CD4-positive, alpha-beta memory T cell (primary cell): ENCODE measurements at regions of chr3 and their contacts with region 1.

Region 1: DNA sequence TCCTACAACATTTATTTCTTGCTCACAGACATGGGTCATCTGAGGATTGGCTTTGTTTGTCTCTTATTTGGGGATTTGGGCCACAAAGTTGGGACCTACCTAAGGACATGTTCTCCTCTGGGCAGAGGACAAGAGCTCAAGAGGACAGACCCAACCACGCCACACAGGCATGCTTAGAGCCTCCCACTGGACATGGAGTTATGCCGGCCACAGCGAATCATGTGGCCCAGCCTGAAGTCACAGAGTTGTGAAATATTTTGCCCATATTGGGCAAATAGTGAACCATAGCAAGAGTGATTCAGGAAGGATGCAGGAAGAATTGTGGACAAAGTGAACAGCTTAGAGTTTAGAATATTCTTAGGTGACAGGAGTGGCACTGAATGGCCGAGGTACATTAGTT is 9.9 kb downstream of the TRAK1 start:
- DNase-seq: no peak
- H3K4me3 ChIP-seq: no peak overlapping the region
- H3K4me3 Mint-ChIP-seq: no peak overlapping the region
- H3K27ac ChIP-seq: no peak overlapping the region
- H3K27ac Mint-ChIP-seq: no peak overlapping the region
- H3K4me1 ChIP-seq: no peaks in the 10 kb centered on the region
- H3K4me1 Mint-ChIP-seq: peaks cover 0 to 3% (median 2%) of the 10 kb centered on the region in 4 donors
- H3K27me3 ChIP-seq: no peaks in the 10 kb centered on the region
- H3K27me3 Mint-ChIP-seq: no peaks in the 10 kb centered on the region

Region 2: DNA sequence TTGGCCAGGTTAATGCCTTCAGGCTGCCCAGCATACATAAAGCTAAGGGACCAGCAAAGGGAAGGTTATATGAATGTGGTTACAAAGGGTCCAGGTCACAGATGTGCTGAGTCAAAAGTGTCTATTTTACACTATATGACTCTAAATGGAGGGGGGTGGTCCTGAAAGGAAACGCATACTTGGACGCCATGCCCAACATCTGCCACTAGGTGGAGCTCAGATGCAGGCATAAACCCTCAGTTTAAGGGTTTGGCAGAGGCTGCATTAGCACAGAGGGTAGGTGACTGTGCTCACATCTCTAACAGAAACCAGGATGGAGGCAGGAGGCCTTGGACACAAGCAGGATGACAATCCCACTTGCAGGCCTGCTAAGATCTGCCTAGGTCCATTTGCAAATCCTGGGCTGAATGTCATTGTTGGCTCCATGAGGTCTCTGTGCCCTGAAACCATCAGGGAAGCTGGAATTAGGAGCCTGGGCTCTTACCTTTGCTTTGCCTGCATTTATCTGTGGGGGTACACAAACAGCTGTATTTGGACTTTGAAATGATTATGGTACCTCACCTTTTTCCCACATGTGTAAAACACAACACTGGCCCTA is 1520.5 kb before region 1 on chr3:
- CTCF ChIA-PET with region 1: interaction called, 13 read pairs
- POLR2A ChIA-PET with region 1: no interaction called
- intact Hi-C with region 1: loop called (anchors 1 kb)
- DNase-seq: peak; percentile 43 to 61 (median 46)
- H3K4me3 ChIP-seq: no peak overlapping the region
- H3K4me3 Mint-ChIP-seq: no peak overlapping the region
- H3K27ac ChIP-seq: no peak overlapping the region
- H3K27ac Mint-ChIP-seq: no peak overlapping the region
- H3K4me1 ChIP-seq: no peaks in the 10 kb centered on the region
- H3K4me1 Mint-ChIP-seq: peaks cover 0 to 1% (median 0%) of the 10 kb centered on the region in 4 donors
- H3K27me3 ChIP-seq: no peaks in the 10 kb centered on the region
- H3K27me3 Mint-ChIP-seq: peaks cover 5 to 10% of the 10 kb centered on the region in 2 donors

Region 3: DNA sequence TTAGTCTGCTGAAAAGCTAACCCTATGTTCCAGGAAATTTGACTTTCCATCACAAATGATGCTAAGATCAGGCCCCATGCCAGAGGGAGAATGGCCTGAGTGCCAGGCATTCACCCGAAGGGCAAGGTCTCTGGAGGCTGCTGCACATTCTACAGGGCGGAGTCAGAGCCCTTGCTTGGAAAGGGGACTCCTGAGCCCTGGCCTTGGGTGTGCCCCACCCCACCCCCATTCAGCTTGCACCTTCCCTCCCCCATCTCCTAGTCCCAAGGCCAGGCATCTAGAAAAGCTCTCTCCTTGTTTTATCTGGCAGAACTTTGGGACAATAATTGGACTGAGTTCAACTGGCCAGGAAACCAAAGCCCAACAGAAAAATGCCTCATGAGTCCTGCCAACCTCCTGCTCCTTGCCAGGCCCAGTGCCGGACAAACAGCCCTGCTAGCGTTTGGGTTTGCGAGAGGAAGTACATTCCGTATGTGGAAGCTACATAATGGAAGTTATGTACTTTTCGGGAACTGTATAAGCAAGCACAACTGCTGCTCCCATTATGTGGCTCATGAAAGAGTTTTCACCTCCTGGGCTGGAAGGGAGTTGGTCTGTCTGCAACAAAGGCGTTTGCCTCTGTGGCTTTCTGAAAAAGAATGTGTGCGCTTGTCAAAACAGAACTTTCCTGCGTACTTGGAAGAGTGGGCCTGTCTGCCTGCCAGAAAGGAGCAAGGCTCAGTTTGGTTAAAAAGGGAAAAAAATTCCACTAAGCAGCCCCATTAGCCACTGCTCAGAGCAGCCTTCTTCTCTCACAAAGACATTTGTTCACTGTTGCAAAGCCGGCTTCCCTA is 1223.2 kb before region 1 on chr3:
- CTCF ChIA-PET with region 1: no interaction called
- POLR2A ChIA-PET with region 1: no interaction called
- intact Hi-C with region 1: no loop called
- DNase-seq: no peak
- H3K4me3 ChIP-seq: no peak overlapping the region
- H3K4me3 Mint-ChIP-seq: no peak overlapping the region
- H3K27ac ChIP-seq: no peak overlapping the region
- H3K27ac Mint-ChIP-seq: no peak overlapping the region
- H3K4me1 ChIP-seq: no peaks in the 10 kb centered on the region
- H3K4me1 Mint-ChIP-seq: no peaks in the 10 kb centered on the region
- H3K27me3 ChIP-seq: no peaks in the 10 kb centered on the region
- H3K27me3 Mint-ChIP-seq: peaks cover 0 to 3% of the 10 kb centered on the region in 2 donors

Region 4: GRCh38 chr3:41893977-41894376 is 207.1 kb before region 1 on chr3:
- CTCF ChIA-PET with region 1: interaction called, 51 read pairs
- POLR2A ChIA-PET with region 1: interaction called, 5 read pairs
- intact Hi-C with region 1: loop called (anchors 1 kb)
- DNase-seq: peak in 4 of 5 donors; percentile 20 to 34 (median 26)
- H3K4me3 ChIP-seq: no peak overlapping the region
- H3K4me3 Mint-ChIP-seq: no peak overlapping the region
- H3K27ac ChIP-seq: no peak overlapping the region
- H3K27ac Mint-ChIP-seq: no peak overlapping the region
- H3K4me1 ChIP-seq: no peaks in the 10 kb centered on the region
- H3K4me1 Mint-ChIP-seq: no peaks in the 10 kb centered on the region
- H3K27me3 ChIP-seq: no peaks in the 10 kb centered on the region
- H3K27me3 Mint-ChIP-seq: no peaks in the 10 kb centered on the region

Region 5: DNA sequence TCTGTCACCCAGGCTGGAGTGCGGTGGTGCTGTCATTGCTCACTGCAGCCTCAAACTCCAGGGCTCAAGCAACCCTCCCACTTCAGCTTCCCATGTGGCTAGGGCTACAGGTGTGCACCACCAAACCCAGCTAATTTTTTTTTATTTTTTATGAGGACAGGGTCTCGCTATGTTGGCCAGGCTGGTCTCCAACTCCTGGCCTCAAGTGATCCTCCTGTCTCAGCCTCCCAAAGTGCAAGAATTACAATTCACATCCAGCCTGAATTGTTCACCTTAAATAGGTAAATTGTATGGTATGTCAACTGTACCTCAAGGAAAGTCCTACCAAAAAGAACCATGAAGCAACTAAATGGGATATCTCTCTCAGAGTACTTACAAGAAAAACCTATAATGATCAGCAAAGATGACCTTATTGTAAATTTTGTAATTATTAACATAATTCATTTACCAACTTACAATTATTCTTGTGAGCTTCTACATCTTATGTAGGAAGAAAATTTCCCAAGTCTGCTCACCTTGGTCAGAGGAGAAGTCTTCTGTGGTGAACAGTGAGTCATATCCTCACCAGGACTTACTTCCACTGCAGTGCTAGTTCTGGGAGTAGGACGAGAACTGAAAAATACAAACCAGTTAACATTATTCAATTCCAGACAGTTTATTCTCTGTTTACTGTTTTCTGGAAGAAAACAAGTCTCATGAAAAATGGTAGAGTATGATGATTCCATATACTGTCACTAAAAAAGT is 193.5 kb before region 1 on chr3:
- CTCF ChIA-PET with region 1: interaction called, 18 read pairs
- POLR2A ChIA-PET with region 1: no interaction called
- intact Hi-C with region 1: no loop called
- DNase-seq: no peak
- H3K4me3 ChIP-seq: no peak overlapping the region
- H3K4me3 Mint-ChIP-seq: no peak overlapping the region
- H3K27ac ChIP-seq: no peak overlapping the region
- H3K27ac Mint-ChIP-seq: no peak overlapping the region
- H3K4me1 ChIP-seq: no peaks in the 10 kb centered on the region
- H3K4me1 Mint-ChIP-seq: peaks cover 0 to 2% (median under 1%) of the 10 kb centered on the region in 4 donors
- H3K27me3 ChIP-seq: no peaks in the 10 kb centered on the region
- H3K27me3 Mint-ChIP-seq: no peaks in the 10 kb centered on the region

Region 6: GRCh38 chr3:42080452-42080891 is 20.6 kb before region 1 on chr3:
- CTCF ChIA-PET with region 1: interaction called, 74 read pairs
- POLR2A ChIA-PET with region 1: interaction called, 3 read pairs
- intact Hi-C with region 1: no loop called
- DNase-seq: peak in 4 of 5 donors; percentile 13 to 64 (median 30)
- H3K4me3 ChIP-seq: no peak overlapping the region
- H3K4me3 Mint-ChIP-seq: peak overlapping the region in 5 of 8 donors; percentile 47 to 83 (median 62)
- H3K27ac ChIP-seq: peak overlapping the region; percentile 53
- H3K27ac Mint-ChIP-seq: peak overlapping the region; percentile 62 to 95 (median 91)
- H3K4me1 ChIP-seq: peaks cover 48% of the 10 kb centered on the region
- H3K4me1 Mint-ChIP-seq: peaks cover 42 to 68% (median 52%) of the 10 kb centered on the region in 4 donors
- H3K27me3 ChIP-seq: no peaks in the 10 kb centered on the region
- H3K27me3 Mint-ChIP-seq: no peaks in the 10 kb centered on the region

Region 7: GRCh38 chr3:42166662-42167300 is 65.7 kb after region 1 on chr3:
- CTCF ChIA-PET with region 1: no interaction called
- POLR2A ChIA-PET with region 1: no interaction called
- intact Hi-C with region 1: no loop called
- DNase-seq: no peak
- H3K4me3 ChIP-seq: no peak overlapping the region
- H3K4me3 Mint-ChIP-seq: no peak overlapping the region
- H3K27ac ChIP-seq: no peak overlapping the region
- H3K27ac Mint-ChIP-seq: peak overlapping the region in 1 of 7 donors; percentile 8
- H3K4me1 ChIP-seq: no peaks in the 10 kb centered on the region
- H3K4me1 Mint-ChIP-seq: peaks cover 12 to 30% (median 16%) of the 10 kb centered on the region in 4 donors
- H3K27me3 ChIP-seq: no peaks in the 10 kb centered on the region
- H3K27me3 Mint-ChIP-seq: no peaks in the 10 kb centered on the region

Region 8: GRCh38 chr3:42190701-42191462 is 89.8 kb after region 1 on chr3:
- CTCF ChIA-PET with region 1: interaction called, 24 read pairs
- POLR2A ChIA-PET with region 1: no interaction called
- intact Hi-C with region 1: no loop called
- DNase-seq: peak; percentile 49 to 61 (median 52)
- H3K4me3 ChIP-seq: no peak overlapping the region
- H3K4me3 Mint-ChIP-seq: no peak overlapping the region
- H3K27ac ChIP-seq: no peak overlapping the region
- H3K27ac Mint-ChIP-seq: peak overlapping the region in 5 of 7 donors; percentile 10 to 61 (median 51)
- H3K4me1 ChIP-seq: no peaks in the 10 kb centered on the region
- H3K4me1 Mint-ChIP-seq: peaks cover 4 to 19% (median 10%) of the 10 kb centered on the region in 4 donors
- H3K27me3 ChIP-seq: no peaks in the 10 kb centered on the region
- H3K27me3 Mint-ChIP-seq: no peaks in the 10 kb centered on the region

Region 9: DNA sequence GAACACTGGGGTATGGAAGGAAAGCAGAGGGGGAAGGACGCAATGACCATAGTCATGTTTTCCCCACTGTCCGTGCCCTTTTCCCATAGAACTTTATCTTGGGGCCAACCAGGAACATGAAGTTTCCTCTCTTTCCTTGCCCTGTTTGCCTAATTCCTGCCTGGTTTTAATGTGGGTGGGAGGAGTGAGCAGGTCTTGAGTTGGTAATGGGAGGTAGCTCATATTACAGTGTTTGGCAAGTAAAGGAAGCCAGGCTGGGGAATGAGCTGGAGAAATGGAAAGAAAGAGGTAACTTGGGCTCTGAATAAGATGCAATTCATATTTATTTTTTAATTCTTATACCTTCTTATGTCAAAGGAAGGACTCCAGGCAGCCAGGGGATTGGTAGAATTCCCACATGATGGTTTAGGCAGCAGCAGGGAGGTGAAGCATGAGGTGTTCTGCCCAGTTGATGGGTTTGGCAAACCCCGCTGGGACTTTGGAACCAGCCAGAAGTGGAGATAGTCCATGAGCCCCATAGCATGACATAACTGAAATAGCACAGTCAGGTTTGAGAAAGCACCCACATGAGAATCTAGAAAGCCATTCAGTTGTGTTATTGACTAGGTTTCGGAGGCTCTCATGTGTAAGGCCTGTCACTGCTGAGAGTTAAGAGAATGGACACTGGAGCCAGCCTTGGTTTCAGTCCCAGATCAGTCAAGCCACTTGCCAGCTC is 104.9 kb after region 1 on chr3:
- CTCF ChIA-PET with region 1: no interaction called
- POLR2A ChIA-PET with region 1: no interaction called
- intact Hi-C with region 1: no loop called
- DNase-seq: no peak
- H3K4me3 ChIP-seq: no peak overlapping the region
- H3K4me3 Mint-ChIP-seq: no peak overlapping the region
- H3K27ac ChIP-seq: no peak overlapping the region
- H3K27ac Mint-ChIP-seq: peak overlapping the region in 2 of 7 donors; percentile 61 to 77
- H3K4me1 ChIP-seq: no peaks in the 10 kb centered on the region
- H3K4me1 Mint-ChIP-seq: no peaks in the 10 kb centered on the region
- H3K27me3 ChIP-seq: no peaks in the 10 kb centered on the region
- H3K27me3 Mint-ChIP-seq: no peaks in the 10 kb centered on the region